ENCODE measurements at regions of chr2 and their contacts with region 1.

Region 1: GRCh38 chr2:227766373-227766883 is 20.7 kb downstream of the SCYGR8 start:
- DNase-seq: peak; percentile 23 to 72 (median 46)
- ATAC-seq: peak; percentile 56
- H3K4me3 ChIP-seq: no peak overlapping the region
- H3K4me3 Mint-ChIP-seq: no peak overlapping the region
- H3K27ac ChIP-seq: no peak overlapping the region
- H3K27ac Mint-ChIP-seq: no peak overlapping the region
- H3K4me1 ChIP-seq: no peaks in the 10 kb centered on the region
- H3K4me1 Mint-ChIP-seq: no peaks in the 10 kb centered on the region
- H3K27me3 ChIP-seq: no peaks in the 10 kb centered on the region
- H3K27me3 Mint-ChIP-seq: no peaks in the 10 kb centered on the region
- CTCF ChIP-seq: peak; percentile 74

Region 2: GRCh38 chr2:227033471-227034148 is 732.8 kb before region 1 on chr2:
- CTCF ChIA-PET with region 1: no interaction called
- POLR2A ChIA-PET with region 1: no interaction called
- intact Hi-C with region 1: loop called (anchors 10 kb)
- DNase-seq: peak in 5 of 14 experiments; percentile 2 to 26 (median 4)
- ATAC-seq: no peak
- H3K4me3 ChIP-seq: no peak overlapping the region
- H3K4me3 Mint-ChIP-seq: no peak overlapping the region
- H3K27ac ChIP-seq: no peak overlapping the region
- H3K27ac Mint-ChIP-seq: no peak overlapping the region
- H3K4me1 ChIP-seq: no peaks in the 10 kb centered on the region
- H3K4me1 Mint-ChIP-seq: no peaks in the 10 kb centered on the region
- H3K27me3 ChIP-seq: no peaks in the 10 kb centered on the region
- H3K27me3 Mint-ChIP-seq: peaks cover 27% of the 10 kb centered on the region
- CTCF ChIP-seq: peak; percentile 32

Region 3: GRCh38 chr2:227130636-227131035 is 635.8 kb before region 1 on chr2:
- CTCF ChIA-PET with region 1: no interaction called
- POLR2A ChIA-PET with region 1: no interaction called
- intact Hi-C with region 1: loop called (anchors 1 to 2 kb)
- DNase-seq: no peak
- ATAC-seq: no peak
- H3K4me3 ChIP-seq: no peak overlapping the region
- H3K4me3 Mint-ChIP-seq: no peak overlapping the region
- H3K27ac ChIP-seq: no peak overlapping the region
- H3K27ac Mint-ChIP-seq: no peak overlapping the region
- H3K4me1 ChIP-seq: no peaks in the 10 kb centered on the region
- H3K4me1 Mint-ChIP-seq: no peaks in the 10 kb centered on the region
- H3K27me3 ChIP-seq: no peaks in the 10 kb centered on the region
- H3K27me3 Mint-ChIP-seq: peaks cover 20% of the 10 kb centered on the region
- CTCF ChIP-seq: no peak

Region 4: GRCh38 chr2:227228061-227228667 is 538.3 kb before region 1 on chr2:
- CTCF ChIA-PET with region 1: no interaction called
- POLR2A ChIA-PET with region 1: no interaction called
- intact Hi-C with region 1: no loop called
- DNase-seq: no peak
- ATAC-seq: no peak
- H3K4me3 ChIP-seq: no peak overlapping the region
- H3K4me3 Mint-ChIP-seq: no peak overlapping the region
- H3K27ac ChIP-seq: no peak overlapping the region
- H3K27ac Mint-ChIP-seq: no peak overlapping the region
- H3K4me1 ChIP-seq: no peaks in the 10 kb centered on the region
- H3K4me1 Mint-ChIP-seq: no peaks in the 10 kb centered on the region
- H3K27me3 ChIP-seq: peaks cover 0 to 5% of the 10 kb centered on the region in 2 experiments
- H3K27me3 Mint-ChIP-seq: peaks cover 21% of the 10 kb centered on the region
- CTCF ChIP-seq: no peak

Region 5: DNA sequence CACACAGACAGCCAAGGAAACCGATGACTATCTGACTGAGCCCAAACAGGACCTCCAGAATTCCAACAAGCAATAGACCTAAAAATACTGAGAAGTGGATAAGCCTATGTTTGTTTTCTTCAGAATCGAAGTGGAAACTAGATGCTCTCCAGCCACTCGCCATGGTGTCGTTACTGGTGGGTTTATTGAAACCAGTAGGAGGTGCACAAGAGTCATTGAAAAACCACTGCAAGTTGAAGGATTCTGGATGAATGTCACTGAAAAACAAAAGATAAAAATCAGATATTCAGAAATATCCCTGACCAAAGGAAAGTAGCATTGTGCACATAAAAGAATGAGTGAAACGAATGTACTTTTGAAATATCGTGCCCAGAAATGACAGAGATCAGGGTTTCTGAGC is 402.7 kb before region 1 on chr2:
- CTCF ChIA-PET with region 1: no interaction called
- POLR2A ChIA-PET with region 1: no interaction called
- intact Hi-C with region 1: loop called (anchors 2 to 10 kb)
- DNase-seq: peak in 4 of 14 experiments; percentile 7 to 37 (median 33)
- ATAC-seq: no peak
- H3K4me3 ChIP-seq: no peak overlapping the region
- H3K4me3 Mint-ChIP-seq: no peak overlapping the region
- H3K27ac ChIP-seq: no peak overlapping the region
- H3K27ac Mint-ChIP-seq: no peak overlapping the region
- H3K4me1 ChIP-seq: no peaks in the 10 kb centered on the region
- H3K4me1 Mint-ChIP-seq: no peaks in the 10 kb centered on the region
- H3K27me3 ChIP-seq: no peaks in the 10 kb centered on the region
- H3K27me3 Mint-ChIP-seq: no peaks in the 10 kb centered on the region
- CTCF ChIP-seq: peak; percentile 21

Region 6: DNA sequence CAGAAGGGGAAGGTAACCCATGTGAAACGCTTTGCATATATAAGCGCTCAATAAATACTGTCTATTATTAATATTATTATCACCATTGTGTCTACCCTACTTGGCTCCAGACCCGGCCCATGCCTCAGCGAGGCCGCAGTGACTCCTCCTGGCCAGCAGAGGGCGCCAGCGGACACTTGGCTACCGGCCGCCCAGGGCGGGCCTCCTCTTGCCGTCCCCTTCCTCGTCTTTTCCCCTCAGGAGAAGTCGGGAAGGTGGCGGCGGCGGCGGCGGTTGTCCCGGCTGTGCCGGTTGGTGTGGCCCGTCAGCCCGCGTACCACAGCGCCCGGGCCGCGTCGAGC is 294.5 kb before region 1 on chr2 and contains the start of gene AGFG1:
- CTCF ChIA-PET with region 1: no interaction called
- POLR2A ChIA-PET with region 1: no interaction called
- intact Hi-C with region 1: loop called in 1 of 2 experiments (anchors 5 kb)
- DNase-seq: peak; percentile 69 to 90 (median 83)
- ATAC-seq: peak; percentile 84
- H3K4me3 ChIP-seq: peak within 1 kb of the TSS; percentile 69
- H3K4me3 Mint-ChIP-seq: peak within 1 kb of the TSS; percentile 96
- H3K27ac ChIP-seq: peak within 1 kb of the TSS in 1 of 2 donors; percentile 41
- H3K27ac Mint-ChIP-seq: peak within 1 kb of the TSS; percentile 91
- H3K4me1 ChIP-seq: peaks cover 18% of the 10 kb centered on the region
- H3K4me1 Mint-ChIP-seq: peaks cover 64% of the 10 kb centered on the region
- H3K27me3 ChIP-seq: no peaks in the 10 kb centered on the region
- H3K27me3 Mint-ChIP-seq: no peaks in the 10 kb centered on the region
- CTCF ChIP-seq: peak; percentile 98
- total RNA-seq, gene AGFG1: 49.9 to 55.9 TPM

Region 7: DNA sequence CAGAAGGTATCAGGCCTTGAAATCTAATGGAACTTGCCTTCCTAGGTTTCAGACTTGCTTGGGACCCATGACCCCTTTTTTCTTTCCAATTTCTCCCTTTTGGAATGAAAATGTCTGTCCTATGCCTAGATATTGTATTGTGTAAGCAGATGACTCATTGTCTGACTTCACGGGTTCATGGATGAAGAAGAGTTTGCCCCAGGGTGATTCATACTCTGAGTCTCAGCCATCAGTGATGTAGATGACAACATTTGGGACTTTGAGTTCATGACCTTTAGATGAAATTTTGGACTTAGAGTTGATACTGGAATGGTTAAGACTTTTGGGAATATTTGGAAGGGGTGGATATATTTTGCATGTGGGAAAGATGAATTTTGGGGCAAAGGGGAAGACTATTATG is 111.0 kb before region 1 on chr2:
- CTCF ChIA-PET with region 1: no interaction called
- POLR2A ChIA-PET with region 1: no interaction called
- intact Hi-C with region 1: loop called in 1 of 2 experiments (anchors 5 kb)
- DNase-seq: peak in 2 of 14 experiments; percentile 15 to 19
- ATAC-seq: no peak
- H3K4me3 ChIP-seq: no peak overlapping the region
- H3K4me3 Mint-ChIP-seq: no peak overlapping the region
- H3K27ac ChIP-seq: no peak overlapping the region
- H3K27ac Mint-ChIP-seq: no peak overlapping the region
- H3K4me1 ChIP-seq: peaks cover 2% of the 10 kb centered on the region
- H3K4me1 Mint-ChIP-seq: no peaks in the 10 kb centered on the region
- H3K27me3 ChIP-seq: peaks cover 0 to 7% of the 10 kb centered on the region in 2 experiments
- H3K27me3 Mint-ChIP-seq: peaks cover 4% of the 10 kb centered on the region
- CTCF ChIP-seq: no peak

Region 8: DNA sequence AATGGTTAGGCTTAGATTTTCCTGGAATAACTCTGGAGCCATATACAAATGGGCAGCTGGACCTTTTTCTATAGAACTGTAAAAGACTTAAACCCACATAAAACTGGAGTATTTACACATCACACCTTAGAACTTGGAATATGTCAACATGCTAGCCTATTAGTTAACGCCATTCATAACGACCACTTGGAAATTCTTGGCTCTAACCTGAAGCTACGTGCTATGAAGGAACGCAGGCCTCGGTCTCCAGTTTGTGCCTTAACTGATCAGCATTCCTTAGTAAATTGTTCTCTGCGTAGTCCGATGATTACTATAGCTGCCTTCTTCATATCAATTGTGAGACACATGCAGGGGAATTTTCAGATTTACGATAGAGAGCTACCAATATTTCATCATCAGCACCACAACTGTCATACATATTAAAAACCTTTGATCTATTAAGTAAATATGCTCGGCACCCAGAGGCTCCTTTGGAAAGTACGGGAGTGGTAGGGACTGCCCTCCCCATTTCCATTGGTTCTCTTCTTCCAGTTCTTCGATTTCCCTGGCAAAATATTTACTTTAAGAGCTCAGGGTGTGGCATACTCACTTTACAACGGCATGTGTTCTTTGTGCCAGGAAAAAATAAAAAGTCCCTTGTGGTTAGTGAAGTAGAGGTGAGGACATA is 29.8 kb after region 1 on chr2:
- CTCF ChIA-PET with region 1: no interaction called
- POLR2A ChIA-PET with region 1: no interaction called
- intact Hi-C with region 1: no loop called
- DNase-seq: no peak
- ATAC-seq: no peak
- H3K4me3 ChIP-seq: no peak overlapping the region
- H3K4me3 Mint-ChIP-seq: no peak overlapping the region
- H3K27ac ChIP-seq: no peak overlapping the region
- H3K27ac Mint-ChIP-seq: no peak overlapping the region
- H3K4me1 ChIP-seq: no peaks in the 10 kb centered on the region
- H3K4me1 Mint-ChIP-seq: no peaks in the 10 kb centered on the region
- H3K27me3 ChIP-seq: no peaks in the 10 kb centered on the region
- H3K27me3 Mint-ChIP-seq: no peaks in the 10 kb centered on the region
- CTCF ChIP-seq: no peak

Region 9: DNA sequence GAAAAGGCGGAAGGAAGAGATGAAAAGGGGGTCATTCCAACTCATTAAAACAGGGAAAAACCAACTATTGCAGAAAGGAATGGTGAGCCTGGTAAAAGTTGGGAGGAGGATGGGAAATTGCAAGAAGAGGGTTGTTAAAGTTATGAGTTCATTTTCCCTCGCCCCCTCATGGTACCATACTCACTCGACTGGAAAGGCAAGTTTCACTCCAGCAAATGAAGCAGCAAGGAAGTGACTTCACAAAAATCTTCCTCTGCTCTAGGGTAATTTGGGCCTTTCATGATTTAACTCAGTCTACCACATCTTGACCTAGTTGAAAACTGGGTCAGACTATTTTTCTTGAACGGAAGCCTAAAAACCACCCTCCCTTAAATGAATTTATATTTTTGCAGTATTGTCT is 82.2 kb after region 1 on chr2:
- CTCF ChIA-PET with region 1: no interaction called
- POLR2A ChIA-PET with region 1: no interaction called
- intact Hi-C with region 1: no loop called
- DNase-seq: peak in 3 of 14 experiments; percentile 71 to 82 (median 71)
- ATAC-seq: peak; percentile 80
- H3K4me3 ChIP-seq: peak overlapping the region; percentile 24
- H3K4me3 Mint-ChIP-seq: peak overlapping the region; percentile 70
- H3K27ac ChIP-seq: peak overlapping the region; percentile 54 to 57
- H3K27ac Mint-ChIP-seq: peak overlapping the region; percentile 81
- H3K4me1 ChIP-seq: peaks cover 21% of the 10 kb centered on the region
- H3K4me1 Mint-ChIP-seq: peaks cover 18% of the 10 kb centered on the region
- H3K27me3 ChIP-seq: no peaks in the 10 kb centered on the region
- H3K27me3 Mint-ChIP-seq: peaks cover 10% of the 10 kb centered on the region
- CTCF ChIP-seq: no peak